GM10248 (cell line): ENCODE measurements at regions of chr10 and their contacts with region 1.

Region 1: GRCh38 chr10:29239569-29240472 is 49.0 kb upstream of the LYZL1 start:
- DNase-seq: peak; percentile 38
- CTCF ChIP-seq: peak; percentile 46

Region 2: GRCh38 chr10:29254123-29255046 is 14.6 kb after region 1 on chr10:
- CTCF ChIA-PET with region 1: interaction called, 18 read pairs
- POLR2A ChIA-PET with region 1: no interaction called
- DNase-seq: no peak
- CTCF ChIP-seq: no peak

Region 3: DNA sequence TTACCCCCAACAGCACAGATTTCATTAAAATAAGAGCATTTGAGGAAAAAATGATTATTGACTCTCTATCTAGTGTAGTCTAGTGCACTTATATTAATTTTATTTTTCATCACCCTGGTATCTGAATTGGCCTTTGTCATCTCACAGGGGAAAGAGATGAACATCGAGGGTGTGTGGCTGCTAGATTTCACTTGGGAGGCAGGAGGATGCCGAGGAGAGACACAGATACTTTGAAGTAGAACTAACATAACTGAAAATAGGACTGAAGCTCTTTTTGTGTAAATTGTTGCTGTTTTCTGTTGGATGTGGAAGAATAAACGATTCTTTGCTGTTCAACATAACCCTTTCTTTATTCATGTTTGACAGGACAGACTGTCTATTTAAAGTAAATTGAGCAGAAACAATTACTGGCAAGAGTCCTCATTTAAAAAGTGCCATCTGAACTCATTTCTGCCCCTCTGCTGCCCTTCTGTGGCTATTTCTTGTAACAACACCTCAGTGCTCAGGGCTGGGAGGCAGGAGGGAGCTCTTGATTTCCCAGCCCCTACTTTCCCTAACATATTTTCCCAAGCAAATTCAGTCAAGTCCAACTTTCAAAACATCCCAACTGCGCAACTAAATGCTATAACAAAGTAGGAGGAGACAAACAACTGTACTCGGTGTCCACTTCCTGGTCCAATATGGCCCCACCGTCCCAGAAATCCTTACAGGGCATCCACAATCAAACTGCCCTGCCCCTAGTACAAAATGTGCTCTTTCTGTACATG is 64.6 kb after region 1 on chr10:
- CTCF ChIA-PET with region 1: interaction called, 12 read pairs
- POLR2A ChIA-PET with region 1: no interaction called
- DNase-seq: peak; percentile 60
- CTCF ChIP-seq: peak; percentile 86